GM13976 (cell line): ENCODE measurements at regions of chr18 and their contacts with region 1.

Region 1: GRCh38 chr18:2932247-2933181 is 80.4 kb downstream of the LPIN2 start:
- DNase-seq: peak; percentile 79
- CTCF ChIP-seq: peak; percentile 31

Region 2: GRCh38 chr18:2618009-2618408 is 314.5 kb before region 1 on chr18:
- in situ Hi-C with region 1: no loop called
- DNase-seq: no peak
- CTCF ChIP-seq: no peak

Region 3: DNA sequence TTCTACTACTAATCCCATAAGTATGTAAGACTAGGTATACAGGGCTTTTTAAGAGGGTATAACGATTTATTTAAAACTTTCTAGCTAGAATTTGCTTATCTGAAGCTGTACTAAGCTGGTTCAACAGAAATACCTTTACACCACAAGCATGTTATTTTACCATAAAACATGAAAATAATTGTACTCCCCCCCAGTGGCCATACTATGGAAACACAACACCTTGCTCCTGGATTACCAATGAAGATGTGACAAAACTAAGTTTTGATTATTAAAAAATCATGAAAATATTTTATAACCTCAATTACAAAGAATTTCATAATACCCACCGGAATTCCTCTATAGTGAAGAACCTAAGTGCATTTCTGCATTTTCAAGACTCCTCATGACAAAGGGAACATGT is 53.1 kb after region 1 on chr18:
- in situ Hi-C with region 1: loop called (anchors 5 kb)
- DNase-seq: no peak
- CTCF ChIP-seq: peak; percentile 52

Region 4: GRCh38 chr18:3135536-3135935 is 203.0 kb after region 1 on chr18:
- in situ Hi-C with region 1: loop called (anchors 10 kb)
- DNase-seq: no peak
- CTCF ChIP-seq: no peak

Region 5: DNA sequence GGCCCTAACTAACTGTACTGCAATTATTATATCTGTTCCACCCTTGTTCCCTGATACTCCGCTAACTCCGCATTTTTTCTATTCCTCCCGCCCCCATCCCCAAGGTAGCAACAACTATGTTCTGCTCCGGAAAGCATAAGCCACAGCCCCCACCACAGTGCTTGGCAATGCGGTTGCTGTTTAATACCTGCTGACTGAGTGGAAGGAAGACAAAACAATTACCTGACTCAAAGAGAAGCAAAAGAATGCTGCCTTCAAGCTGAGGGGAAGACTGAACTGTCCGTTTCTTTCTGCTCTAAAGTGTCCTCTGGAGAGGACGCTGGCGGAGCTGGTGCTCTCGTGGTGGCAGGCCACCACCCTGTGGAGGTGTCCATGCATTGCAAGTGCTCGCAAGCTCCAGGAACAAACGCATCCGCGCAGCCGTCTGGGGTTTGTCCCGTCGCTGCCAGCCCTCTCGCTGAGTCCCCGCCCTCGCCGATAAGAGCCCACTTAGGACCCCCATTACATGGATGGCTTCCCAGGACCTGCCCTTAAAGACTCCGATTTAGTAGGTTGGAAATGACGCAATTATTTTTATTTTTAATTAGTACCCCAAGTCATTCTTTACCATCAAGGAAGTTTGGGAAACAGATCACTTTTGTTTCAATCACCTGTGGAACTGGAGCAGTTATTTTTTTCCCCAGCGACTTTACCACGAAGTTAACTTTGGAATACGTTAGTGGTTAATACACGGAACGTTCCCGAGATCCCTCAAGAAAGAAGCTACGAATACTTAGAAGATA is 313.5 kb after region 1 on chr18:
- in situ Hi-C with region 1: loop called (anchors 5 kb)
- DNase-seq: peak; percentile 76
- CTCF ChIP-seq: peak; percentile 96